ENCODE measurements at regions of chr2 and their contacts with region 1.

Region 1: GRCh38 chr2:129504646-129505045 is 474.8 kb upstream of the RAB6C start:
- DNase-seq: no peak
- ATAC-seq: no peak
- H3K4me3 ChIP-seq: no peak overlapping the region
- H3K27ac ChIP-seq: no peak overlapping the region
- H3K4me1 ChIP-seq: no peaks in the 10 kb centered on the region
- H3K27me3 ChIP-seq: no peaks in the 10 kb centered on the region
- CTCF ChIP-seq: no peak
- POLR2A ChIP-seq: no peak

Region 2: GRCh38 chr2:129396980-129397599 is 107.6 kb before region 1 on chr2:
- intact Hi-C with region 1: no loop called
- DNase-seq: peak in 2 of 5 donors; percentile 31 to 40
- ATAC-seq: peak in 3 of 4 donors; percentile 52 to 70 (median 59)
- H3K4me3 ChIP-seq: no peak overlapping the region
- H3K27ac ChIP-seq: no peak overlapping the region
- H3K4me1 ChIP-seq: peaks cover 0 to 3% (median 0%) of the 10 kb centered on the region in 12 donors
- H3K27me3 ChIP-seq: no peaks in the 10 kb centered on the region
- CTCF ChIP-seq: peak; percentile 39 to 65 (median 54)
- POLR2A ChIP-seq: no peak

Region 3: DNA sequence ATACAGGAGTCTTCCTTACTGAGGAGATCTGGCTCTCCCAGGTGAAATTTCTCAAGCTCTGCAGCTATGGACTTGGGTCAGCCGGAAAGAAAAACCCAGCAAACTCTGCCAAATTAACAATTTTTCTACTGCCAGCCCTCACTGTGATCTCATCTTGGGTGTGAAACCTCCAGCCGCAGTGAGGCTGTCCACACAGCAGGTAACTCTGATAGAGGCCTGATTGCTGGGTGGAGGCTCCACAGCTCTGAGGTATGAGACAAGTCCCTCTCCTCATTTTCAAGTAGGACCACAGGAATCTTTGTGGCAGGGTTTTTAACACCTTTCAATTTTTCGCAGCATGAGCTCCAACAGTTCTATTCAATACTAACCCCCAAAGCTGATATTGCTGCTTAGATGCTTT is 44.2 kb after region 1 on chr2:
- intact Hi-C with region 1: loop called in 1 of 10 experiments (anchors 2 kb)
- DNase-seq: no peak
- ATAC-seq: no peak
- H3K4me3 ChIP-seq: no peak overlapping the region
- H3K27ac ChIP-seq: no peak overlapping the region
- H3K4me1 ChIP-seq: no peaks in the 10 kb centered on the region
- H3K27me3 ChIP-seq: peaks cover 0 to 11% (median 0%) of the 10 kb centered on the region in 9 donors
- CTCF ChIP-seq: no peak
- POLR2A ChIP-seq: no peak

Measured in heart left ventricle (tissue), 16 donors.